ENCODE measurements at regions of chr12 and their contacts with region 1.

Region 1: GRCh38 chr12:6825398-6826124 is 2.6 kb upstream of the P3H3 start:
- H3K4me3 ChIP-seq: no peak overlapping the region
- H3K27ac ChIP-seq: no peak overlapping the region
- H3K4me1 ChIP-seq: peaks cover 6% of the 10 kb centered on the region; the same call in 1 of the 2 replicates
- CTCF ChIP-seq: peak; percentile 96

Region 2: DNA sequence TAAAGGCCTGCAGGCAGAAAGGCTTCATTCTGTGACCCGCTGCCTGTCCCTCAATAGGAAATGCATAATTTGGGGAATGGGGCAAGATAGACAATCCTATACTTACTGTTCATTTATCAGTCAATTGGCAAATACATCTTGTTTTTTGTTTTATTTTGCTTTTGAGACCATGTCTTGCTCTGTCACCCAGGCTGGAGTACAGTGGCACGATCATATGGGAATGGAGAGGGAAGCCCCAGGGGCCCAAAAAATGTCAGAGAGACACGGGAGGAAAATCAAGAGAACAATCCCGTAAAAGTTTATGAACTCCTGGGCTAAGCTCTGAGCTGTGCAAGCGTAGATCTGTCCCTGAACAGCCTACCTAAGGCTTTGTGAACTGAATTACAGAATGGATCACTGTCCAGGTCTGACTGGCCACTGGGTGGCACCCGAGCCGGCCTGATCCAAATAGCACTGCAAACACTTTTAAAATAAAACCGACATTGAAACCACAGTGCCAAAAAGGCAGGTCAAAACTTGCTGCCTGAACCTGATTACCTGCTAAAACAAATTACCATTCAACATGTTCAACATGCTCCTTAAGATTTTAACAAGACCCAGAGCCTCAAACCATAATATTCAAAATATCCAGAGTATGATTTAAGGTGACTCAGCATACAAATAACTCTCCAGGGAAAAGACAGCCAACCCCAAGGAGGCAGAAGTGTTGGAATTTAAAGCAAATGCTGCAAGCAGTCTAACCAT is 89.9 kb before region 1 on chr12:
- CTCF ChIA-PET with region 1: interaction called, 13 read pairs
- POLR2A ChIA-PET with region 1: no interaction called
- H3K4me3 ChIP-seq: no peak overlapping the region
- H3K27ac ChIP-seq: no peak overlapping the region
- H3K4me1 ChIP-seq: no peaks in the 10 kb centered on the region
- CTCF ChIP-seq: peak; percentile 64; the same call in 1 of the 2 replicates

Region 3: GRCh38 chr12:6764011-6764828 is 61.3 kb before region 1 on chr12:
- CTCF ChIA-PET with region 1: interaction called, 13 read pairs
- POLR2A ChIA-PET with region 1: interaction called, 10 read pairs
- H3K4me3 ChIP-seq: no peak overlapping the region; the same call in 1 of the 2 replicates
- H3K27ac ChIP-seq: peak overlapping the region; percentile 92
- H3K4me1 ChIP-seq: peaks cover 30% of the 10 kb centered on the region
- CTCF ChIP-seq: no peak

Region 4: GRCh38 chr12:6792522-6793201 is 32.9 kb before region 1 on chr12:
- CTCF ChIA-PET with region 1: interaction called, 10 read pairs
- POLR2A ChIA-PET with region 1: no interaction called
- H3K4me3 ChIP-seq: no peak overlapping the region
- H3K27ac ChIP-seq: no peak overlapping the region
- H3K4me1 ChIP-seq: no peaks in the 10 kb centered on the region
- CTCF ChIP-seq: no peak

Region 5: GRCh38 chr12:6851921-6852650 is 26.5 kb after region 1 on chr12 and contains the start of gene USP5:
- CTCF ChIA-PET with region 1: interaction called, 75 read pairs
- POLR2A ChIA-PET with region 1: interaction called, 55 read pairs
- H3K4me3 ChIP-seq: peak within 1 kb of the TSS; percentile 76
- H3K27ac ChIP-seq: peak within 1 kb of the TSS; percentile 58
- H3K4me1 ChIP-seq: peaks cover 11% of the 10 kb centered on the region
- CTCF ChIP-seq: peak; percentile 70